ENCODE measurements at regions of chr6 and their contacts with region 1.

Region 1: GRCh38 chr6:125956506-125957390 is at the start of gene HINT3:
- DNase-seq: peak; percentile 98
- ATAC-seq: peak; percentile 90
- H3K4me3 Mint-ChIP-seq: no peak within 1 kb of the TSS
- H3K27ac Mint-ChIP-seq: peak within 1 kb of the TSS; percentile 41
- H3K4me1 Mint-ChIP-seq: peaks cover 5% of the 10 kb centered on the region
- H3K27me3 Mint-ChIP-seq: peaks cover 10% of the 10 kb centered on the region
- total RNA-seq, gene HINT3: 8.0 to 9.1 TPM

Region 2: GRCh38 chr6:125637207-125637606 is 319.5 kb before region 1 on chr6:
- CTCF ChIA-PET with region 1: no interaction called
- POLR2A ChIA-PET with region 1: no interaction called
- DNase-seq: no peak
- ATAC-seq: no peak
- H3K4me3 Mint-ChIP-seq: no peak overlapping the region
- H3K27ac Mint-ChIP-seq: no peak overlapping the region
- H3K4me1 Mint-ChIP-seq: no peaks in the 10 kb centered on the region
- H3K27me3 Mint-ChIP-seq: no peaks in the 10 kb centered on the region

Region 3: GRCh38 chr6:125790358-125791150 is 166.2 kb before region 1 on chr6 and contains the start of gene NCOA7:
- CTCF ChIA-PET with region 1: interaction called, 225 read pairs
- POLR2A ChIA-PET with region 1: interaction called, 50 read pairs
- DNase-seq: peak; percentile 87
- ATAC-seq: peak; percentile 85
- H3K4me3 Mint-ChIP-seq: peak within 1 kb of the TSS; percentile 86
- H3K27ac Mint-ChIP-seq: peak within 1 kb of the TSS; percentile 98
- H3K4me1 Mint-ChIP-seq: peaks cover 45% of the 10 kb centered on the region
- H3K27me3 Mint-ChIP-seq: no peaks in the 10 kb centered on the region
- total RNA-seq, gene NCOA7: 27.8 to 31.7 TPM

Region 4: DNA sequence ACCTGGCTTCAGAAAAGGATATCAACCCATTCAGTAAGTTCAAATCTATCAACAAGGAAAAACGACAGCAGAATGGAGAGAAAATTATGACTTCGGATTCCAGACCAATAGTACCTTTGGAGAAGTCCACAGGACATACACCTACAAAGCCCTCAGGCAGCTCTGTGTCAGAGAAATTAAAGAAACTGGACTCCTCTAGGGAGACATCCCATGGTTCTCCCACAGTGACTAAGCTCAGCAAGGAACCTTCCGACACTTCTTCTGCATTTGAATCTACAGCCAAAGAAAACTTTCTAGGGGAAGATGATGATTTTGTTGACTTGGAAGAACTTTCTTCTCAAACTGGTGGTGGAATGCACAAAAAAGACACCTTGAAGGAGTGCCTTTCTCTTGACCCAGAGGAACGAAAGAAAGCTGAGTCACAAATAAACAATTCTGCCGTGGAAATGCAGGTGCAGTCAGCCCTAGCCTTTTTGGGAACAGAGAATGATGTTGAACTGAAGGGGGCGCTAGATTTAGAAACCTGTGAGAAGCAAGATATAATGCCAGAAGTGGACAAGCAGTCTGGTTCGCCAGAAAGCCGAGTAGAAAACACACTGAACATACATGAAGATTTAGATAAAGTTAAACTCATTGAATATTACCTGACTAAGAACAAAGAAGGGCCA is 67.6 kb before region 1 on chr6:
- CTCF ChIA-PET with region 1: interaction called, 21 read pairs
- POLR2A ChIA-PET with region 1: no interaction called
- DNase-seq: peak; percentile 27
- ATAC-seq: no peak
- H3K4me3 Mint-ChIP-seq: no peak overlapping the region
- H3K27ac Mint-ChIP-seq: no peak overlapping the region
- H3K4me1 Mint-ChIP-seq: no peaks in the 10 kb centered on the region
- H3K27me3 Mint-ChIP-seq: no peaks in the 10 kb centered on the region

Region 5: GRCh38 chr6:125913864-125914351 is 42.8 kb before region 1 on chr6:
- CTCF ChIA-PET with region 1: interaction called, 60 read pairs
- POLR2A ChIA-PET with region 1: interaction called, 15 read pairs
- DNase-seq: no peak
- ATAC-seq: no peak
- H3K4me3 Mint-ChIP-seq: no peak overlapping the region
- H3K27ac Mint-ChIP-seq: no peak overlapping the region
- H3K4me1 Mint-ChIP-seq: peaks cover 18% of the 10 kb centered on the region
- H3K27me3 Mint-ChIP-seq: no peaks in the 10 kb centered on the region

Region 6: DNA sequence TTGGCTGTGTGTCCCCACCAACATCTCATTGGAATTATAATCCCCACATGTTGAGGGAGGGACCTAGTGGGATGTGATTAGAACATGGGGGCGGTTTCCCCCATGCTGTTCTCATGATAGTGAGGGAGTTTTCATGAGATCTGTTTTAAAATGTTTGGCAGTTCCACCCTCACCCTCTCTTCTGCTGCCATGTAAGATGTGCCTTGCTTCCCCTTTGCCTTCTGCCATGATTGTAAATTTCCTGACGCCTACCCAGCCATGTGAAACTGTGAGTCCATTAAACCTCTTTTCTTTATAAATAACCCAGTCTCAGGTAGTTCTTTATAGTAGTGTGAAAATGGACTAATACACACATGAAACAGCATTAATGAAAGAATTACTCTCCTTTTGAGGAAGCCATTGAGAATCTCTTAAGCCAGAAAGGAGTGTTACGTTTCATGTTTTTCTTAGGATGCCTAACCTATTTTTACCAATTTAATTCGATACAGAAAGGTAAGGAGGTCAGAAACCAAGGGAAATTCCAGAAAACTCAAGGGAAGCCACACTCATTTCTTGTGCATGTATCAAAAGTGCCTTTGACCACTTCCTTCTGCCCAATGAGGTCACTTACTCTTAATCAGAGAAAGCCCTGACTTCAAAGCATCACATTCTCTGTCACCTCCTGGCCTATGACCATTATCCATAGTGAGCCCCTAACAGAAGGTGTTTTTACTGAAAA is 24.9 kb before region 1 on chr6:
- CTCF ChIA-PET with region 1: interaction called, 46 read pairs
- POLR2A ChIA-PET with region 1: no interaction called
- DNase-seq: no peak
- ATAC-seq: peak; percentile 51
- H3K4me3 Mint-ChIP-seq: no peak overlapping the region
- H3K27ac Mint-ChIP-seq: no peak overlapping the region
- H3K4me1 Mint-ChIP-seq: peaks cover 16% of the 10 kb centered on the region
- H3K27me3 Mint-ChIP-seq: peaks cover 5% of the 10 kb centered on the region

Region 7: GRCh38 chr6:125986300-125987025 is 29.7 kb after region 1 on chr6 and contains the start of gene TRMT11:
- CTCF ChIA-PET with region 1: interaction called, 22 read pairs
- POLR2A ChIA-PET with region 1: interaction called, 6 read pairs
- DNase-seq: peak; percentile 83
- ATAC-seq: peak; percentile 99
- H3K4me3 Mint-ChIP-seq: peak within 1 kb of the TSS; percentile 13
- H3K27ac Mint-ChIP-seq: no peak within 1 kb of the TSS
- H3K4me1 Mint-ChIP-seq: peaks cover 13% of the 10 kb centered on the region
- H3K27me3 Mint-ChIP-seq: no peaks in the 10 kb centered on the region
- total RNA-seq, gene TRMT11: 17.1 to 18.1 TPM

Measured in activated CD8-positive, alpha-beta T cell treated with anti-CD3 and anti-CD28 coated beads, Interleukin-2, amount 10 ng/mL, durations not matched to agents 7 days and 5 days (primary cell).